RWPE1 (cell line): ENCODE measurements at regions of chr10 and their contacts with region 1.

Region 1: GRCh38 chr10:88791924-88792323 is 10.6 kb upstream of the LIPM start:
- DNase-seq: peak; percentile 39
- H3K27ac ChIP-seq: no peak overlapping the region
- CTCF ChIP-seq: peak; percentile 49

Region 2: GRCh38 chr10:88687853-88688467 is 104.0 kb before region 1 on chr10:
- CTCF ChIA-PET with region 1: interaction called, 10 read pairs
- POLR2A ChIA-PET with region 1: no interaction called
- DNase-seq: peak; percentile 58
- H3K27ac ChIP-seq: no peak overlapping the region
- CTCF ChIP-seq: peak; percentile 85